Transverse colon (tissue), 4 donors: ENCODE measurements at regions of chr17 and their contacts with region 1.

Region 1: DNA sequence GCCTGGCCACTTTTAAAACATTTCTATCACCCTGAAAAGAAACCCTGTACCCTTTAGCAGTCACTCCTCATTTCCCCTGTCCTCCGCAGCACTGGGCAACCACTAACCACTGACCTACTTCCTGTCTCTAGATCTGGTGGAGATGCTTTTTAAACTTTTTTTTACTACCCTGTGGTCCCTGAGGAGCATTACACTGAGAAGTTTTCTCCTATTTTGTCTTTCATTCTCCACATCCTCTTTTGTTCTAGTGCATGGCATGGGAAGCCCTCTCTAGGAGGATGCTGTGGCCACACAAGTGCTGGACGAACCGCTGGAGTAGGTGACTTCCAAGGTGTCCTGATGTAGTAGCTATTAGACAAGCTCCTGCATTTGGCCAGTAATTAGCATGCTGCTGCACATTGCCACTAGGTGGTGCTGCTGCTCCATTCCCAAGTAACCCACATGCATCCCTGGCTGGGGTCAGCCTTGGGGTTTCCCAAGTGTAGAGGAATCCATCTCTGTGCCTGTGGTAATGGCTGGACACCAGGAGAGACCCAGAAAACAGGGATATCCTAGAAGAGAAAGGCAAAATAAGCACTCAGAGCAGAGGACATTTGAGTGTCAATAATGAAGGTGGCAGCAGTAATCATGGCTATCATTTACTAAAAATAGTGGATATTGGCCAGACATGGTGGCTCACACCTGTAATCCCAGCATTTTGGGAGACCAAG is 143.8 kb upstream of the CRHR1 start:
- DNase-seq: peak; percentile 68
- H3K4me3 ChIP-seq: no peak overlapping the region
- H3K27ac ChIP-seq: no peak overlapping the region
- H3K4me1 ChIP-seq: no peaks in the 10 kb centered on the region
- H3K27me3 ChIP-seq: peaks cover 9% of the 10 kb centered on the region
- CTCF ChIP-seq: peak; percentile 82 to 95 (median 92)
- EP300 ChIP-seq: no peak
- POLR2A ChIP-seq: no peak

Region 2: DNA sequence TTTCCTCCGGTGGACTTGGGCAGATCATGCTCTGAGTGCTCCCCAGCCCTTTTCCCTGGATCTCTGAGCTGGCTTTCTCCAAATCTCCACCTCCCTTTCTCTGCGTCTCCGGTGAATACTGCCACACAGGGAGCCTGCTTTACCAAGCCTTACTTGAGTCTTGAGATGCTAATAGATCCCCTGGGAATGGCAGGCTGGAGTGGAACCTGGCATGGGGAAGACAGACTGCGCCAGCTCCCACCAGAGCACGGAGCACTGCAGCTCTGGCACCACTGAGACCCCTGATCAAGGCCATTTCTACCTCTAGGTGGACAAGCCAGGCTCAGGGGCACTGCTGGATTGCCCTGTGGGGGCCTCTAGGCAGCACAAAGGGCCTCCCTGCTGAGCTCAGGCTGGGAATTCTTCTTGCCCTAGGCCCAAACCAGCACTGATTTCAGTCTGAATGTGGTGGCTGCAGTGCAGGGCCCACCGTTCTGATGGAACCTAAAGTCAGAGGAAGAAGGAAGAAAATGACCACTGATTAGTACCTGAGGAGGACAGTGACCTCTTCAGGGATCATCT is 69.5 kb after region 1 on chr17:
- in situ Hi-C with region 1: no loop called
- intact Hi-C with region 1: no loop called
- DNase-seq: no peak
- H3K4me3 ChIP-seq: no peak overlapping the region
- H3K27ac ChIP-seq: no peak overlapping the region
- H3K4me1 ChIP-seq: no peaks in the 10 kb centered on the region
- H3K27me3 ChIP-seq: peaks cover 27% of the 10 kb centered on the region
- CTCF ChIP-seq: no peak
- EP300 ChIP-seq: no peak
- POLR2A ChIP-seq: no peak

Region 3: DNA sequence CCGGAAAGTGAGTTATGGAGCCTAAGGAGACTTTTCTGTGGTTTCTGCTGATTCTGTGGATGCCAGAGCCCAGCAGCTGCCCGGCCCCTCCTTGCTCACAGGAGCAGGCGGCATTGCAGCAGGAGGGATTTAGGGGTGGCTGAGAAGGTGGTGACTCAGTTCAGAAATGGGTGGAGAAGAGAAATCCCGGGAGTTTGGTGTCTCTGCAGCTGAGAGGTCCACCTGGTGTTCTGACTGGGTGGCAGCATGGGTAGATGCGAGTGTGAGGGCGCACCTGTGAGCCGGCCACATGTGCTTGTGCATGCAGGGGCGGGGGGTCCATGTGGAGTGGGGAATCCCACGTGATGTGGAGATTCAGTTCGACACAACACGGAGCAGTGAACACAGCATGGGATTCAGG is 188.3 kb after region 1 on chr17:
- in situ Hi-C with region 1: loop called (anchors 5 to 10 kb)
- intact Hi-C with region 1: loop called (anchors 1 kb)
- DNase-seq: no peak
- H3K4me3 ChIP-seq: no peak overlapping the region
- H3K27ac ChIP-seq: no peak overlapping the region
- H3K4me1 ChIP-seq: no peaks in the 10 kb centered on the region
- H3K27me3 ChIP-seq: peaks cover 5% of the 10 kb centered on the region
- CTCF ChIP-seq: no peak
- EP300 ChIP-seq: no peak
- POLR2A ChIP-seq: no peak

Region 4: GRCh38 chr17:45834471-45835396 is 194.4 kb after region 1 on chr17:
- in situ Hi-C with region 1: loop called (anchors 5 to 10 kb)
- intact Hi-C with region 1: loop called (anchors 1 kb)
- DNase-seq: no peak
- H3K4me3 ChIP-seq: no peak overlapping the region
- H3K27ac ChIP-seq: no peak overlapping the region
- H3K4me1 ChIP-seq: no peaks in the 10 kb centered on the region
- H3K27me3 ChIP-seq: no peaks in the 10 kb centered on the region
- CTCF ChIP-seq: no peak
- EP300 ChIP-seq: no peak
- POLR2A ChIP-seq: no peak